ENCODE measurements at regions of chr11 and their contacts with region 1.

Region 1: GRCh38 chr11:56783448-56784041 is 35.0 kb upstream of the OR9G4 start:
- DNase-seq: peak; percentile 79
- H3K4me3 ChIP-seq: peak overlapping the region; percentile 59
- H3K27ac ChIP-seq: no peak overlapping the region
- H3K4me1 ChIP-seq: no peaks in the 10 kb centered on the region
- H3K27me3 ChIP-seq: 0 out of 2 replicates have a peak, but pooled peaks cover 3% of the 10 kb centered on the region

Region 2: DNA sequence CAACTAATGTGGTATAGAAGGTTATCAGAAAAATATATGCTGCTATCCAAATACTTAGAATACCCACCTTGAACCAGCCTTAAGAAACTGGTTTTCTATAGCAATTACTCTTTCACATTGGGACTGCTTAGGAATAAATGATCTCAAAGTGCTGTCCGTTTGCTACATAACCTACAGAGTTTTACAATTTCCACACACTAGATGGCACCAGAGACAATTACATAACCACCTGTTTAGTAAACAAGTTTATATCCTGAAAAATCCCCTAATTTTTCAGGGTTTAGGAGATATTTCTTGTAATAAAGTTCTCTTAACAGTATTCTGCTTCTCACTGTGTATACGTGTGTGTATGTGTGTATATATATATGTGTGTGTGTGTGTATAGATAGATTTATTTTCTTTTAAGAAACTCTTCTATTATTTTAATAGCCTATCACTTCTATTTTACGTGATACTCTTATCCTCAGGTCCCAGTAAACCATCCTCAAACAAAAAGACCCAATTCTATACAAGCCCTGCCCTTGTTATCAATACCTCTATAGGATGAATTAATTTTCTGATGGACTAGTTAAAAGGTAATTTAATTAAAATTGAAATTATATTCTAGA is 840.7 kb before region 1 on chr11:
- in situ Hi-C with region 1: loop called (anchors 25 kb)
- DNase-seq: peak; percentile 49
- H3K4me3 ChIP-seq: no peak overlapping the region
- H3K27ac ChIP-seq: no peak overlapping the region
- H3K4me1 ChIP-seq: no peaks in the 10 kb centered on the region
- H3K27me3 ChIP-seq: no peaks in the 10 kb centered on the region

Region 3: GRCh38 chr11:56314844-56315243 is 468.7 kb before region 1 on chr11 and contains the start of gene OR8K3:
- in situ Hi-C with region 1: no loop called
- DNase-seq: no peak
- H3K4me3 ChIP-seq: no peak within 1 kb of the TSS
- H3K27ac ChIP-seq: no peak within 1 kb of the TSS
- H3K4me1 ChIP-seq: no peaks in the 10 kb centered on the region
- H3K27me3 ChIP-seq: no peaks in the 10 kb centered on the region
- total RNA-seq, gene OR8K3: not detected in 2 replicates